Lower leg skin (tissue), 4 donors: ENCODE measurements at regions of chr15 and their contacts with region 1.

Region 1: GRCh38 chr15:88274553-88275460 is 18.3 kb upstream of the NTRK3 start:
- DNase-seq: peak; percentile 32 to 91
- H3K4me3 ChIP-seq: no peak overlapping the region
- CTCF ChIP-seq: peak in 1 of 3 donors; percentile 54
- POLR2A ChIP-seq: no peak

Region 2: GRCh38 chr15:87973501-87974215 is 301.1 kb before region 1 on chr15:
- intact Hi-C with region 1: no loop called
- DNase-seq: no peak
- H3K4me3 ChIP-seq: no peak overlapping the region
- CTCF ChIP-seq: no peak
- POLR2A ChIP-seq: no peak

Region 3: DNA sequence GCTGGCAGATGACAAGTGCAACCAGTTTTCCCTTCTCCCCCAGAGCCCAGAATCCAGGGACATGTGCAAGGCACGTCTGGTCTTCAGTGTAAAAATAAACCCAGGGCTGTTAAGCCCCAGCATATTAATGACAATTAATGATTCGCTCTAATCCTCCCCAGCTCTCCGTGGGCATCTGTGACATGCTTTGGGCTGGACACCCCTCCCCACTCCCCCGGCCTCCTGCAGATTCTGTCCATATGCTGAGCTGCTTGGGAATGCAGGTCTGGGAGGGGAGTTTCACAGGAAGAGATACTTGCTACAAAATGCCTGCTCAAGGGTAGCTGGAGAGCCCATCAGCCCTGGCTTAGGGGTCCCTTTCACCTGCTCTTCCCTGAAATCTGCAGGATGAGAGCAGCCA is 24.7 kb after region 1 on chr15:
- intact Hi-C with region 1: no loop called
- DNase-seq: no peak
- H3K4me3 ChIP-seq: no peak overlapping the region
- CTCF ChIP-seq: no peak
- POLR2A ChIP-seq: no peak

Region 4: GRCh38 chr15:88365124-88365523 is 90.3 kb after region 1 on chr15:
- intact Hi-C with region 1: no loop called
- DNase-seq: no peak
- H3K4me3 ChIP-seq: no peak overlapping the region
- CTCF ChIP-seq: no peak
- POLR2A ChIP-seq: no peak

Region 5: GRCh38 chr15:88454867-88455810 is 180.3 kb after region 1 on chr15:
- intact Hi-C with region 1: loop called (anchors 5 kb)
- DNase-seq: peak in 1 of 2 donors; percentile 72
- H3K4me3 ChIP-seq: no peak overlapping the region
- CTCF ChIP-seq: no peak
- POLR2A ChIP-seq: no peak